Left ventricle myocardium inferior (tissue), 1 donor: ENCODE measurements at regions of chr7 and their contacts with region 1.

Region 1: DNA sequence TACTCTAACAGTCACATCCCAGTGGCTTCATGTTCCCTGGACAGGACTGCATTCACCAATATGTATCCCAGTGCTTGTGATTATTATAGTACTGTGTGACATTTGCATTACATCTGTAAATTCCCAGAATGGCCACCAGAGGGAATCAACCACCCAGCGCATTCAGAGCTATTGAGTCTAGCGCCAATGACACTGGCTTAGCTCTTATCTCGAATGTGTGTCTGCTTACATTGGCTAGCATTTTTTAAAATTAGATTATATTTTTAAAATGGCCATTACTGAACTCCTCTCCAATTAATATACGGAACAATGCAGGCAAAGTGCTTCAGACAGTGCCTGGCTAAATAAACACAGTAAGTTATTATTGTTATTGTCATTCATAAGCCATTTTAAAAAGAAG is 36.3 kb downstream of the TRIL start:
- DNase-seq: no peak
- H3K4me3 ChIP-seq: no peak overlapping the region
- H3K27ac ChIP-seq: no peak overlapping the region
- H3K4me1 ChIP-seq: peaks cover 18% of the 10 kb centered on the region
- H3K27me3 ChIP-seq: no peaks in the 10 kb centered on the region
- CTCF ChIP-seq: peak; percentile 90

Region 2: DNA sequence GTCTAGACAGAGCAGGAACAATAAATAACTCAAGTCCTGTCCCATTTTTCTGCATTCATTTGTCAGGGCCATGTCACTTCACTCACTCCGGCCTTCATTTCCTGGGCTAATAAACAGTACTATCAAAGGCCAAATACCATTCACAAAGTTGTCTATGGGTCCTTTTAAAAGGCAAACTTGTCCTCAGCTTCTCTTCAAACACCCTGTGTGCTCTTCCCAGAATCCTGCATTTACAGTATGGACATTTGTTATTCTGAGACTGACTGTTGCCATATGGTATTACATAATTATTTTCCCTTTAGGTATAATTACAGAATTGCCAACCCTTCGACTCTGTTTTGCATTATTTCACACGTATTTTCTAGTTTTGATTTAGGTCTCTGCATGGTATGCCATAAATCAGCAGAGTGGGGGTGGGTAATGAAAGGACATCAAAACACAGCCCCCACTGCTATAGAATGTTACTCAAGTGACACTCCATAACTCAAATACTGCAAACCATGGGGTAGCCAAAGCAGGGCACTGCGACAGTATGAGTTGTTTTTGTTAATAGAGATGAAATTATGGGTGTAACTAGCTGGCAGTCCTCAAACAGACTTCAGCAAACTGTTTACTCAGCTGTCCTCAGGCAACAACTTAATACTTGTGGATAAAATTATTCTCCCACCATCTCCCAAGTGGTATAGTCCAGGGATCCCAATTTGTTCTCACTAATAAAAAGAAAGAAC is 147.4 kb before region 1 on chr7:
- intact Hi-C with region 1: no loop called
- DNase-seq: no peak
- H3K4me3 ChIP-seq: no peak overlapping the region
- H3K27ac ChIP-seq: peak overlapping the region; percentile 25
- H3K4me1 ChIP-seq: peaks cover 5% of the 10 kb centered on the region
- H3K27me3 ChIP-seq: no peaks in the 10 kb centered on the region
- CTCF ChIP-seq: no peak

Region 3: DNA sequence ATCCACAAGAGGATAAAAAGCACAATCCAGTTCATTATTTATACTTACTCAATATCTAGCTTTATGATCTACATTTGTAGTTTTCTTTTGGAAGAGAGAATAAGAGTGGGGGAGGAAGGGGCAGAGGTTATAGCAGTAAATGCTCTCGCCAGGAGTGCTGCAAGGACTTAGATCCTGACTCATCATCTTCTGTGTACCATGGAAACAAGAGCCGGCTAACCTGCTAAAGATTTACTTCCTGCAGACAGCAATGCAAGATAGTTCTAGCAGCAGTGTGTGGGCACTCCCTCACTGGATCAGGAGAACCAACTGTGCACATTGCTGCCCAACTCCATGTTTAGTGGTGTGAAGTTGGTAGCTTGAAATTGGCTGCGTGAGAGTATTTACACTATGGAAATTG is 84.0 kb after region 1 on chr7:
- intact Hi-C with region 1: no loop called
- DNase-seq: no peak
- H3K4me3 ChIP-seq: no peak overlapping the region
- H3K27ac ChIP-seq: no peak overlapping the region
- H3K4me1 ChIP-seq: peaks cover 25% of the 10 kb centered on the region
- H3K27me3 ChIP-seq: no peaks in the 10 kb centered on the region
- CTCF ChIP-seq: no peak

Region 4: DNA sequence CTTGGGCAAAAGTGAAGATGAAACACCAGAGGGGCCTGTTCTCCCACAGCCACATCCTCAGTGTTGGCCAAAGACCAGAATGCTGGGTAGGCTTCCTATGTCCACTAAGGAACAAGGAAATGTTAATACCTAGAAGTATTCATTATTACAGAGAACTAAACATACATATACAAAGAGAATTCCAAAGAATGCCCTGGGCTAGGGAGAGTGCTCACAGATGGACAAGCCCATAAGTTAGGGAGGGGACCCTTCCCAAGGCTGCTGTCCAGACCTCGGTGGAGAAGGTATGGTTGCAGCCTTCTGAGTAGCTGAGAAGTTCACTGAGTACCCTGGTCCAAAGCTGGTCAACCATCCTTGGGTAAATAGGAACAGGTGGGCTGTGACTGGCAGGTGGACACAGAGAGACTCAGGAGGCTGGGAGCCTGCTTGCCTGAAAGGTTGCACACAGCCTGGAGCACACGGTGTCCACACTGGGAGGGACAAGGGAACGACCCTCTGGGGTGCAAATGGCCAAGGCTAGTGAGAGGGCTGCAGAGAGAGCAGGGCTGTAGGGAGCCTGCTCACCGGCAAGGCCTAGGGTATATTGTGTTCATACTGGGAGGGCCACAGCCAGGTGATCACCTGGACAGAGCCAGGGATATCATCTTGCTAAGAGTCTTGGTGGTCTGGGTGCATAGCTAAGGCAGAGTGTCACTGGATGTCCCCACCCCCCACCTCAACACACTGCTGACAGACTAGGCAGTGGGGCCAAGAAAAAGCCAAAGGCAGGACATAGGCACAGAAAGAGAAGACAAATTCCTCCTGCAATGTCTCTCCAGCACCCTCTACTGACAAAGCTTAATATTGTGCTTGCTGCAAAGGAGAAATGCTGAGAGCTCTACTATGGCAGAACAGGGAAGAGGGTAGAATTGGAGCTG is 184.2 kb after region 1 on chr7:
- intact Hi-C with region 1: loop called (anchors 1 kb)
- DNase-seq: no peak
- H3K4me3 ChIP-seq: no peak overlapping the region
- H3K27ac ChIP-seq: no peak overlapping the region
- H3K4me1 ChIP-seq: peaks cover 26% of the 10 kb centered on the region
- H3K27me3 ChIP-seq: no peaks in the 10 kb centered on the region
- CTCF ChIP-seq: peak; percentile 93

Region 5: GRCh38 chr7:29228289-29229011 is 306.6 kb after region 1 on chr7:
- intact Hi-C with region 1: no loop called
- DNase-seq: no peak
- H3K4me3 ChIP-seq: no peak overlapping the region
- H3K27ac ChIP-seq: no peak overlapping the region
- H3K4me1 ChIP-seq: peaks cover 9% of the 10 kb centered on the region
- H3K27me3 ChIP-seq: no peaks in the 10 kb centered on the region
- CTCF ChIP-seq: no peak

Region 6: DNA sequence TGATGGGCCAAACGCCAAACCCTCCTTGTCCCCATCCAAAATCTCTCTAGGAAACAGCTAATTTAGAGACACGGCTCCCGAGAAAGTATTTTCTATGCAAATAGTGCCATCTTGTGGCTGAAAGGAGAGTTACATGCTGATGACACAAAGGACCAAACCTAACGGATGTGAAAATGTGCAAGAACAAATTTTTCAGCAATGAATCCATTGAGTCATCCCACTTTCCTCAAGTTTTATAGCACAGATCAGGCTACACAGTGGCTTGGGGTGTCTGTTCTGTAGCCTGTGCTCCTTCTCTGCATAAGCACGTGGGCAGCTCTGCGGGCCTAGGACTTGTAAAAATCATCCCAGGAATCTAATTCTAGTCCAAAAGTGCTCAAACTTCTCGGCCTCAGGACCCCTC is 487.0 kb after region 1 on chr7:
- intact Hi-C with region 1: loop called (anchors 5 kb)
- DNase-seq: no peak
- H3K4me3 ChIP-seq: no peak overlapping the region
- H3K27ac ChIP-seq: no peak overlapping the region
- H3K4me1 ChIP-seq: no peaks in the 10 kb centered on the region
- H3K27me3 ChIP-seq: no peaks in the 10 kb centered on the region
- CTCF ChIP-seq: peak; percentile 88